Natural killer cell (primary cell): ENCODE measurements at regions of chr15 and their contacts with region 1.

Region 1: GRCh38 chr15:78540141-78540928 is at the start of gene PSMA4:
- DNase-seq: peak; percentile 95 to 96
- ATAC-seq: peak; percentile 87 to 93 (median 88)
- H3K4me3 ChIP-seq: peak within 1 kb of the TSS; percentile 88
- H3K4me3 Mint-ChIP-seq: peak within 1 kb of the TSS; percentile 92
- H3K27ac ChIP-seq: peak within 1 kb of the TSS; percentile 96
- H3K27ac Mint-ChIP-seq: peak within 1 kb of the TSS; percentile 89 to 92
- H3K4me1 ChIP-seq: peaks cover 16% of the 10 kb centered on the region
- H3K4me1 Mint-ChIP-seq: peaks cover 32 to 33% of the 10 kb centered on the region in 2 donors
- H3K27me3 ChIP-seq: no peaks in the 10 kb centered on the region
- H3K27me3 Mint-ChIP-seq: no peaks in the 10 kb centered on the region
- CTCF ChIP-seq: no peak
- total RNA-seq, gene PSMA4: 94.6 to 124 (median 96.4) TPM

Region 2: DNA sequence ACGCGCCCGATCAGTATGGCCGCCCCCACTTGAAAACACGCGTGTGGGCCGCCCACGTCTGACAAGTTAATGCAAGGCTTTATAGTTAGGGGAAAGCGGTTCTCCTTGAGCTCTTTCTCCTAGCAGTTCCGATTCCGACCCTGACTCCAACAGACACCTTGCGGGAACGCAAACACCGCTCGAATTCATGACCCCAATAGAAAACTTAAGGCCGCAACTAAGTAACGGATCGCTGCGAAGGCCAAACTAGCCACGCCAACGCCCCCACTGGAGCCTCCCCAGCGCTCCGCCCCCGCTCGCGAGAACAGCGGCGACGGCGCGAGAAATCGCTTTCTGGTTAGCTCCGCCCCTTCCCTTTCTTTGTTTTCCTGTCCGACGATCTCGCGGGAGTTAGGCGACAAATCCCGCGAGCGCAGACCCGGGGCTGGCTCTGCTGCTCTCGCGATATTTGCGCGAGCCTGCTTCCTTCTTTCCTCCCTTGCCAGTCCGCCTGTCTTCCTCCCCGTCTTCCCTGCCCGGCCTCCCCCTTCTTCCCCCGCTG is 102.5 kb before region 1 on chr15 and contains the start of gene IREB2:
- intact Hi-C with region 1: loop called (anchors 1 kb)
- DNase-seq: peak; percentile 97 to 100
- ATAC-seq: peak; percentile 91 to 96 (median 92)
- H3K4me3 ChIP-seq: peak within 1 kb of the TSS; percentile 95
- H3K4me3 Mint-ChIP-seq: peak within 1 kb of the TSS; percentile 79
- H3K27ac ChIP-seq: peak within 1 kb of the TSS; percentile 95
- H3K27ac Mint-ChIP-seq: peak within 1 kb of the TSS; percentile 83 to 85
- H3K4me1 ChIP-seq: peaks cover 17% of the 10 kb centered on the region
- H3K4me1 Mint-ChIP-seq: peaks cover 29 to 44% of the 10 kb centered on the region in 2 donors
- H3K27me3 ChIP-seq: no peaks in the 10 kb centered on the region
- H3K27me3 Mint-ChIP-seq: peaks cover 4 to 12% of the 10 kb centered on the region in 2 donors
- CTCF ChIP-seq: no peak
- total RNA-seq, gene IREB2: 84.9 to 121 (median 99.0) TPM

Region 3: DNA sequence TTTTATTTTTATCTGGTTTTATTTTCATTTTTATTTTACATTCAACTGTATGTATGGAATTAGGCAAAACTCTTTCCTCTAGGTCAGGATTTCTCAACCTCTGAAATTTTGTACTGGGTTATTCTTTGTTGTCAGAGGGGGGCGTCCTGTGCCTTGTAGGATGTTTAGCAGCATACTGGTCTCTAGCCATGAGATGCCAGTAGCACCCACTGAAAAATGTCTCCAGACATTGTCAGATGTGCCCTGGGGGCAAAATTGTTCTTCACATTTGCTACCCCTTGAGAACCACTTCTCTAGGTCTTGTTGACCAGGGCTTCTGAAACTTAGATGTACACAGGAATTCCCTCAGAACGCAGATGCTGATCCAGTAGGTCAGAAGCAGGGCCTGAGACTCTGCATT is 30.4 kb after region 1 on chr15:
- intact Hi-C with region 1: no loop called
- DNase-seq: no peak
- ATAC-seq: no peak
- H3K4me3 ChIP-seq: no peak overlapping the region
- H3K4me3 Mint-ChIP-seq: no peak overlapping the region
- H3K27ac ChIP-seq: no peak overlapping the region
- H3K27ac Mint-ChIP-seq: no peak overlapping the region
- H3K4me1 ChIP-seq: peaks cover 6% of the 10 kb centered on the region
- H3K4me1 Mint-ChIP-seq: peaks cover 9 to 10% of the 10 kb centered on the region in 2 donors
- H3K27me3 ChIP-seq: peaks cover 5% of the 10 kb centered on the region
- H3K27me3 Mint-ChIP-seq: peaks cover 14 to 24% of the 10 kb centered on the region in 2 donors
- CTCF ChIP-seq: no peak

Region 4: DNA sequence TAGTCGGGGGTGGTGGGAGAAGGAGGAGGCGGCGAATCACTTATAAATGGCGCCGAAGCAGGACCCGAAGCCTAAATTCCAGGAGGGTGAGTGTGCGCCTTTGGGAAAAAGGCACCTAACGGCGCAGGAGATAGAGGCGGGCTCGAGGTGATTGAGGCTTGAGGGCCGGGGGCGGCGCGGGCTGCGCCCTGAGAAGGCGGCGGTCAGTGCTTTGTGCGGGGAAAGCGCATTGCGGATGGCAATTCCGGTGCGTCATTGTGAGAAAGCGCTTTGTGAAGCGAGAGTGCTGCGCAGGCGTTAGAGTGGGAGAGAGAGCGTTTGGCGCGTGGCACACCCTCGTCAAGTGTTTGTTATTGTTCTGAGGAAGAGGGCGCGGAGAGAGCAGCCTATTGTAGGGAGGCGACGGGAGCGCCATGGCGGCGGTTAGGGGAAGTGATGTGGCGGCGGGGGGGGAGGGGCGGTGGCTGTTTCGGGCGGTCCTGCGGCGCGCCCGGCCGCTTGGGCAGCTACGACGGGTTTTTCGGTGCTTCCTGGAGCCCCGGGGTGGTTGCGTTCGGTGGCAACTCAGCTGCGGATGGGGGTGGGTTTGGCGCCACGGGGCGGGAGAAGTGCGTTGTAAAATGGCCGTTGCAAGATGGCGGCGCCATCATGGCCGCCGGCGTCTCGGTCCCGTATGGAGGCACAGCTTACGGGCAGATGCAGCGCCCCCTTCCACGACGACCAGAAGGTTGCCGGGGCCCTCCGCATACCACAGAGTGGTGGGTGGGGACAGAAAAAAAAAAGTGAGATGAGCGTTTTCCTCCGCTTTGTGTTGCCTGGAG is 332.8 kb after region 1 on chr15:
- intact Hi-C with region 1: loop called (anchors 2 kb)
- DNase-seq: peak; percentile 83 to 96
- ATAC-seq: peak; percentile 61 to 82 (median 63)
- H3K4me3 ChIP-seq: peak overlapping the region; percentile 92
- H3K4me3 Mint-ChIP-seq: peak overlapping the region; percentile 96
- H3K27ac ChIP-seq: peak overlapping the region; percentile 98
- H3K27ac Mint-ChIP-seq: peak overlapping the region; percentile 99 to 100
- H3K4me1 ChIP-seq: peaks cover 32% of the 10 kb centered on the region
- H3K4me1 Mint-ChIP-seq: peaks cover 40 to 42% of the 10 kb centered on the region in 2 donors
- H3K27me3 ChIP-seq: no peaks in the 10 kb centered on the region
- H3K27me3 Mint-ChIP-seq: no peaks in the 10 kb centered on the region
- CTCF ChIP-seq: peak; percentile 33